Caco-2 (cell line): ENCODE measurements at regions of chr11 and their contacts with region 1.

Region 1: GRCh38 chr11:126158054-126158791 is 53.2 kb downstream of the RPUSD4 start:
- DNase-seq: peak; percentile 70 to 85
- H3K4me3 ChIP-seq: no peak overlapping the region
- H3K4me3 Mint-ChIP-seq: no peak overlapping the region
- H3K27ac Mint-ChIP-seq: no peak overlapping the region
- H3K4me1 ChIP-seq: peaks cover 36% of the 10 kb centered on the region
- H3K4me1 Mint-ChIP-seq: no peaks in the 10 kb centered on the region
- H3K27me3 ChIP-seq: no peaks in the 10 kb centered on the region
- H3K27me3 Mint-ChIP-seq: no peaks in the 10 kb centered on the region
- CTCF ChIP-seq: no peak

Region 2: DNA sequence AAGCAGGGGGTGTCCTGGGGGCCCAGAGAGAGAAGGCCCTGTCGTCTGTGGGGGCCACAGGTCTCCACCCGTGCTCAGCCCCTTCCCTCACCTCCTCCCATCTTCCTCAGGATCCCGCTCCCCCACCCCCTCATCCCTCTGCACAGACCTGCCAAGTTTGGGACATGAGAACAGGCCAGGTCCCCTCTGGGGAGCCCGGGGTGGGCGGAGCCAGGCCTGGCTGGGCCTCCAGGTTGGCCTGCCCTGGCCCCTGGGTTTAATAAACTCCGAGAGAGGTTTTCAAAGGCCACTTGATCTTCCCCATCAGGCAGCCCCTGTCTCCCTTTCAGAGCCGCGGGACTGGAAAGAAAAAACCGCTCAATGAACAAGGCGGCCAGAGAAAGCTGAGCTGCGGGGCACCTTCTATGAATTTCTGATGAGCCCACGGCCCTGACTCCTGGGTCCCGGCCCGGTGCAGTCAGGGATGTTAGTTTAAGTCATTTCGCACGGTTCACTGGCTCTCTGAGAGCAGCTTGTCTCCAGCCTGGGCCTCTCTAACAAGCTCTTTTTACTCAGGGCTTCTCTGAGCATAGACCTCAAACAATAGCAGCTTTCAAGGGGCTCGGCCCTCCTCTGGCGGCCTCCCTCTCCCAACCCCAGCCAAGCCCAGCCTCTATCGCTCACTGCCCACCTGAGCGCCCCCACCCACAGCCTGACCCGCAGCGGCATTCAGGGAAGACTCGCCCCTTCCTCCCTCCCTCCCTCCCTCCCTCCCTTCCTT is 11.6 kb before region 1 on chr11:
- CTCF ChIA-PET with region 1: no interaction called
- POLR2A ChIA-PET with region 1: no interaction called
- intact Hi-C with region 1: loop called (anchors 1 kb)
- DNase-seq: no peak
- H3K4me3 ChIP-seq: no peak overlapping the region
- H3K4me3 Mint-ChIP-seq: no peak overlapping the region
- H3K27ac Mint-ChIP-seq: peak overlapping the region; percentile 81
- H3K4me1 ChIP-seq: peaks cover 34% of the 10 kb centered on the region
- H3K4me1 Mint-ChIP-seq: peaks cover 30% of the 10 kb centered on the region
- H3K27me3 ChIP-seq: 0 out of 2 replicates have a peak, but pooled peaks cover 1% of the 10 kb centered on the region
- H3K27me3 Mint-ChIP-seq: no peaks in the 10 kb centered on the region
- CTCF ChIP-seq: peak in 1 of 2 experiments; percentile 2